ENCODE measurements at regions of chr5 and their contacts with region 1.

Region 1: DNA sequence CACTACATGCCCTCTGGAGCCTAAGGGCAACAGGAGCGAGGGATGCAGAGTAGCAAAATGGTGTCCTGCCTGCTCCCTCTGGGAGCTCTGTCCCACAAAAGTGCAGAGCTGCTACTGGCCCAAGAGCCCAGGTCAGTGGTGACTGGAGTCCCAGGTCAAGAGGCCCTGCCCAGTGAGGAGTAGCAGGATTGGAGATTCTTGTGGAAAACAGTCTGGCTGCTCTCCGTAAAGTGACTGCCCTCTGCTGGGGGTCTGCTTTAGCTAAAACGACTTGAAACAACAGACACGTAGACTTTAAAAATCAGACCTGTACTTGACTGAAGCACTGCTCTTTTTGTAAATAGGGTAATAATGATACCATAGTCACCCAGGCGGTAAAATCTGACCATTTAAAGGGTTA is 917.0 kb downstream of the MAT2B start:
- DNase-seq: no peak
- ATAC-seq: no peak

Region 2: DNA sequence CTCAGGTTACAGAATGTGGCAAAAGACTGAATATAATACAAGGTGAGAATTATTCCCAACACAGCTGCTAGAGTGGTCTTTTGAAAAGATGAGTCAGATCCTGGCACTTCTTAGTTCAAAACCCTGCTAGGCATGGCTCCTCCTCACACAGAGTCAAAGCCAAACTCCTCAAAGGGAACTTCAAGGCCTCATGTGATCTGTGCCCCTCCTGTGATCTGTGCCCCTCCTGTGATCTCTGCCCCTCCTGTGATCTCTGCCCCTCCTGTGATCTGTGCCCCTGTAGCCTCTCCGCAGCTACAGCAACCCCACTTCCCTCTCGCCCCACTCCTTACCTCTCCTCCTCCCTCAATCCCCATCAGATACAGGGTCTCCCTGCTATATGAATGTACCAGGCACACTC is 1510.5 kb before region 1 on chr5:
- intact Hi-C with region 1: no loop called
- DNase-seq: no peak
- ATAC-seq: no peak

Region 3: DNA sequence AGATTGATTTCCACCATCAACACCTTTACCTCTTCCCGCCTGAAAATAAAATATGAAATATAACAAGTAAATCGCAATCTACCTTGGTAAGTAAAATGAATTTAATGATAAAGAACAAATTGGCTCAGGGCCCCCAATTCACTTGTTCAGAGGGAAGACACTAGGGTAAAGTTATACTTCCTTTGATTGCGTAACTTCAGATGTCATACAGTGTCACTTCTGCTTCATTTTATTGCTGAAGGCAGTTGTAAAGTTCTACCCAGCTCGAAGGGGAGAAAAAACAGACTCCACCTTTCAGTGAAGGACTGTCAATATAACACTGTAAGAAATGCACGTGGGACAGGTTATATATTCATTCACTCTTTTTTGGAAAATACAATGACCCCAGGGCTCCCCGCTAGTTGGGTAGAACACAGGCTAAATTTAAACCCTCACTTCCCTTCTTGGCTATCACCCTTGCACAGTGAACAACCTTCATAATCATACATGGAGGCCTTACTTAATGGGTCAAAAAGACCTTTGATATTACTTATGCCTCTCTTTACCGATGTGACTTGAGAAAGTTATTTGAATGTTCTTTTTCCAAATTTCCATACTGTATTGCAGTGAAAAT is 68.2 kb before region 1 on chr5:
- intact Hi-C with region 1: loop called (anchors 2 kb)
- DNase-seq: no peak
- ATAC-seq: no peak

Measured in sciatic nerve (tissue), 2 donors.